Activated CD8-positive, alpha-beta T cell treated with anti-CD3 and anti-CD28 coated beads for 36 hours (primary cell): ENCODE measurements at regions of chr12 and their contacts with region 1.

Region 1: DNA sequence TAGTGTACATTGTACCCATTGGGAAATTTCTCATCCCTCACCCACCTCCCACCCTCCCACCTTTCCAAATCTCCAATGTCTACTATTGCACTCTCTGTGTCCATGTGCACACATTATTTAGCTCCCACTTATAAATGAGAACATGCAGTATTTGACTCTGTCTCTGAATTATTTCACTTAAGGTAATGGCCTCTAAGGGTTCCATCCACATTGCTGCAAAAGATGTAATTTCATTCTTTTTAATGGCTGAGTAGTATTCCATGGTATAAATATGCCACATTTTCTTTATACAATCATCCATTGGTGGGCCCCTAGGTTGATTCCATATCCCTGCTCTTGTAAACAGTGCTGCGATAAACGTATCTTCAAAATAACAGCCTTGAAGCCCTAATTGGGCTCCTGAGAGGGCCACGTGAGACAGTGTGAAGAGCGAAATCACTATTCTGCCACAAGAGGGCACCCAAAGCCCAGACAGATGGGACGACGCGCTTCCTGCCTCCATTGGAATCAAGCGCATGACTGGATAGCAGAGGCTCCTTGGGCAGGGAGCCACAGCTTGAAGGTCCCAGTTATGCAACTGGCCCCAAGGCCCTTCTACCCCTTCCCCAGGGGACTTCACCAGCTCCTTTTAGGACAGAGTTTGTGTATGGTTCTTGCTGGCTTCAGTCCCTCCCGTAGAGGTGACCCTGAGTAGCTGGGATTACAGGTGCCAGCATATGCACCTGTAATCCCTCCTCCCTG is 21.3 kb upstream of the CD27 start:
- DNase-seq: peak; percentile 87
- ATAC-seq: peak; percentile 55
- H3K4me3 Mint-ChIP-seq: peak overlapping the region; percentile 50
- H3K27ac Mint-ChIP-seq: peak overlapping the region; percentile 93
- H3K4me1 Mint-ChIP-seq: peaks cover 46% of the 10 kb centered on the region
- H3K27me3 Mint-ChIP-seq: no peaks in the 10 kb centered on the region
- CTCF ChIP-seq: peak; percentile 80

Region 2: DNA sequence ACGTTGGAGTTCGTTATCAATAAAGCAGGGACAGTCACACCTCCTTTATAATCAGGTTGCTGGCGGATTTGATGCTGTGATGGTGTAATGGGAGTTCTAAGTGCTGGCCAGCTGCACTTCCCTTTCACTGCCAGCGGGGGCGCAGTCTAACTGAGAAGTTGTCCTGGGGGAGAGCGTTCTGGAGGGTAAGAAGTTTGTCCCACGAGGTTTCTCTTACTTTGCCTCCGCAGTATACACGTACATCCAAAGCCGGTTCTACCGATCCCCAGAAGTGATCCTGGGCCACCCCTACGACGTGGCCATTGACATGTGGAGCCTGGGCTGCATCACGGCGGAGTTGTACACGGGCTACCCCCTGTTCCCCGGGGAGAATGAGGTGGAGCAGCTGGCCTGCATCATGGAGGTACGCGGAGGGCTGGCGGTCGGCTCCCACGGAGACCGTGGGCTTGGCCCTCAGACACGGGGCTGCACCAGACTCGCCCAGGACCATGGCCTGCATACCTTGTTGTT is 1818.7 kb before region 1 on chr12:
- CTCF ChIA-PET with region 1: no interaction called
- POLR2A ChIA-PET with region 1: no interaction called
- intact Hi-C with region 1: no loop called
- DNase-seq: peak; percentile 88
- ATAC-seq: peak; percentile 100
- H3K4me3 Mint-ChIP-seq: peak overlapping the region; percentile 94
- H3K27ac Mint-ChIP-seq: peak overlapping the region; percentile 94
- H3K4me1 Mint-ChIP-seq: peaks cover 23% of the 10 kb centered on the region
- H3K27me3 Mint-ChIP-seq: peaks cover 3% of the 10 kb centered on the region
- CTCF ChIP-seq: peak; percentile 98

Region 3: GRCh38 chr12:6335451-6336078 is 87.9 kb before region 1 on chr12:
- CTCF ChIA-PET with region 1: interaction called, 7 read pairs
- POLR2A ChIA-PET with region 1: interaction called, 3 read pairs
- intact Hi-C with region 1: loop called (anchors 10 kb)
- DNase-seq: peak; percentile 96
- ATAC-seq: peak; percentile 71
- H3K4me3 Mint-ChIP-seq: no peak overlapping the region
- H3K27ac Mint-ChIP-seq: no peak overlapping the region
- H3K4me1 Mint-ChIP-seq: peaks cover 52% of the 10 kb centered on the region
- H3K27me3 Mint-ChIP-seq: no peaks in the 10 kb centered on the region
- CTCF ChIP-seq: peak; percentile 48

Region 4: GRCh38 chr12:6443361-6443983 is 20.0 kb after region 1 on chr12:
- CTCF ChIA-PET with region 1: interaction called, 89 read pairs
- POLR2A ChIA-PET with region 1: interaction called, 74 read pairs
- intact Hi-C with region 1: no loop called
- DNase-seq: peak; percentile 84
- ATAC-seq: peak; percentile 68
- H3K4me3 Mint-ChIP-seq: peak overlapping the region; percentile 93
- H3K27ac Mint-ChIP-seq: peak overlapping the region; percentile 99
- H3K4me1 Mint-ChIP-seq: peaks cover 61% of the 10 kb centered on the region
- H3K27me3 Mint-ChIP-seq: no peaks in the 10 kb centered on the region
- CTCF ChIP-seq: no peak

Region 5: DNA sequence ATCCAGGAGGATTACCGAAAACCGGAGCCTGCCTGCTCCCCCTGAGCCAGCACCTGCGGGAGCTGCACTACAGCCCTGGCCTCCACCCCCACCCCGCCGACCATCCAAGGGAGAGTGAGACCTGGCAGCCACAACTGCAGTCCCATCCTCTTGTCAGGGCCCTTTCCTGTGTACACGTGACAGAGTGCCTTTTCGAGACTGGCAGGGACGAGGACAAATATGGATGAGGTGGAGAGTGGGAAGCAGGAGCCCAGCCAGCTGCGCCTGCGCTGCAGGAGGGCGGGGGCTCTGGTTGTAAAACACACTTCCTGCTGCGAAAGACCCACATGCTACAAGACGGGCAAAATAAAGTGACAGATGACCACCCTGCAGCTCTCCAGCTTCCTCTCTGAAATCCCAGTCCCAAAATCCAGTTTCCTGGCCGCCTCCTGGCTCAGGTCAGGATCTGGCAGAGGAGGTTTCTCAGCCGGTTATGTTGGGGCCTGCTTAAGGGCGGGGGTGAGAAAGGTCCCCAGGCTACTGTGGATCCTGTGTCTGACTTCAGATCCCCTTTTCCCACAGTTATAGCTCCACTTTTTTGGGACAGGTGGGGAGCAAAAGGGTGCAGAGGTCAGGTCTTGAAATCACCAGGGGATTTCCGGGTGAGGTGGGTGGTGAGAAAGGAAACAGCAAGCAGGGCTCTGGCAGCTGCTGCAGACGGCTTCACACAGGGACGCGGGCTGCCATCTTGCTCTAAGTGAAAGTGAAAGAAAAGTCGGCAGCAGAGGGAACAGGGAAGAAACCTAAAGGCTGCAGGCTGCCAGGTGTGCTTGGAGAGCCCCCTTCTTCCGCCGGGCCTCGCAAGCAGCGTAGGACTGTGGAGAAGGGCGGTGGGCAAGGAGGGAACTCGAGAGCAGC is 28.2 kb after region 1 on chr12 and contains the start of gene TAPBPL:
- CTCF ChIA-PET with region 1: interaction called, 89 read pairs
- POLR2A ChIA-PET with region 1: interaction called, 74 read pairs
- intact Hi-C with region 1: no loop called
- DNase-seq: peak; percentile 94
- ATAC-seq: peak; percentile 77
- H3K4me3 Mint-ChIP-seq: peak within 1 kb of the TSS; percentile 97
- H3K27ac Mint-ChIP-seq: peak within 1 kb of the TSS; percentile 99
- H3K4me1 Mint-ChIP-seq: peaks cover 53% of the 10 kb centered on the region
- H3K27me3 Mint-ChIP-seq: no peaks in the 10 kb centered on the region
- CTCF ChIP-seq: no peak
- total RNA-seq, gene TAPBPL: 23.3 to 28.0 TPM

Region 6: GRCh38 chr12:6461401-6462233 is 38.2 kb after region 1 on chr12:
- CTCF ChIA-PET with region 1: interaction called, 145 read pairs
- POLR2A ChIA-PET with region 1: interaction called, 104 read pairs
- intact Hi-C with region 1: loop called (anchors 1 kb)
- DNase-seq: peak; percentile 96
- ATAC-seq: peak; percentile 81
- H3K4me3 Mint-ChIP-seq: peak overlapping the region; percentile 76
- H3K27ac Mint-ChIP-seq: peak overlapping the region; percentile 97
- H3K4me1 Mint-ChIP-seq: peaks cover 83% of the 10 kb centered on the region
- H3K27me3 Mint-ChIP-seq: no peaks in the 10 kb centered on the region
- CTCF ChIP-seq: no peak

Region 7: GRCh38 chr12:6493497-6494257 is 70.2 kb after region 1 on chr12 and contains the start of gene NCAPD2:
- CTCF ChIA-PET with region 1: interaction called, 16 read pairs
- POLR2A ChIA-PET with region 1: interaction called, 6 read pairs
- intact Hi-C with region 1: loop called (anchors 2 kb)
- DNase-seq: peak; percentile 98
- ATAC-seq: peak; percentile 88
- H3K4me3 Mint-ChIP-seq: peak within 1 kb of the TSS; percentile 99
- H3K27ac Mint-ChIP-seq: peak within 1 kb of the TSS; percentile 99
- H3K4me1 Mint-ChIP-seq: peaks cover 31% of the 10 kb centered on the region
- H3K27me3 Mint-ChIP-seq: no peaks in the 10 kb centered on the region
- CTCF ChIP-seq: no peak
- total RNA-seq, gene NCAPD2: 195 to 196 TPM

Region 8: DNA sequence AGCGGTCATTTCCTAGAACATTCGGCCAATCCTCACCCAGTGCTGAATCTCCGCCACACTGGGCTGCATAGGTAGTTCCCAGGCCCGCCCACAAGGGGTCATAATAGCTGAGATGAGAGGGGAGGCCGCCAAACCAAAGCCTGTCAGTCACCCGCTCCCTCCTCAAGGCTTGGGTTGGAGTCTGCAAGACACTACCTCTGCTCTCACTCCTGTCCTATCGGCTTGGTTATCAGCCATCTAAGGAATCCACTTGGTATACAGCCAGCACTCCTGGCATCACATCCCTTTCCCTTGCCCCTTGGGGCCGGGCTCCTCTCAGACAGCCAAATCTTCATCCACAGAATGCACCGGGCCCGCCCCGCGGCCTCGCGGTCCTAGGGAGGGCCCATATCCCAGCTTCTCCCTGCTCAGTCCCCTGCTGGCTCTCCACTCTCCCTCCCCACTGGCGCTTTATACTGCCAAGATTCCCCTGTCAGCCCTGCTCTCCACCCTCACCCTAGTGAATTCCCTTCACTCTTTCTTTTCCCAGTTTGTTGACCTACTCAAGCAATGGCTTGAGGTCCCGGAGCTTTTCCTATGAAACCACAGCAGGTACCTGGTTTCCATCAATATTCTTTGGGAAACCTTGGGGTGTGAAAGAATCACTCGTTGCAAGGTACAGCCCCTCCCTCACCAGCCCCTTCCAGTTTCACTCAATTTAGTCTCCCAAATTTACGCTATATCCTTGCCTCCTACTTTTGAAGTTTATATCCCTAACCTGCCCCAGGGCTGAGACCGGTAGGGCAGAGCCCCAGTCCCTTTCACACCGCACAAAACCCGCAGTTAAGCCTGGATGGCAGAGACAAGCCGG is 131.0 kb after region 1 on chr12:
- CTCF ChIA-PET with region 1: interaction called, 12 read pairs
- POLR2A ChIA-PET with region 1: interaction called, 3 read pairs
- intact Hi-C with region 1: no loop called
- DNase-seq: peak; percentile 89
- ATAC-seq: peak; percentile 76
- H3K4me3 Mint-ChIP-seq: peak overlapping the region; percentile 89
- H3K27ac Mint-ChIP-seq: peak overlapping the region; percentile 51
- H3K4me1 Mint-ChIP-seq: peaks cover 50% of the 10 kb centered on the region
- H3K27me3 Mint-ChIP-seq: no peaks in the 10 kb centered on the region
- CTCF ChIP-seq: peak; percentile 62